ENCODE measurements at regions of chr2 and their contacts with region 1.

Region 1: GRCh38 chr2:83561592-83561991 is 897.5 kb downstream of the SUCLG1 start:
- DNase-seq: no peak
- ATAC-seq: no peak
- H3K4me3 ChIP-seq: no peak overlapping the region
- H3K27ac ChIP-seq: no peak overlapping the region
- H3K4me1 ChIP-seq: no peaks in the 10 kb centered on the region
- H3K27me3 ChIP-seq: no peaks in the 10 kb centered on the region
- CTCF ChIP-seq: no peak

Region 2: GRCh38 chr2:81747481-81748070 is 1814.0 kb before region 1 on chr2:
- intact Hi-C with region 1: loop called in 1 of 10 experiments (anchors 5 kb)
- DNase-seq: no peak
- ATAC-seq: no peak
- H3K4me3 ChIP-seq: no peak overlapping the region
- H3K27ac ChIP-seq: no peak overlapping the region
- H3K4me1 ChIP-seq: no peaks in the 10 kb centered on the region
- H3K27me3 ChIP-seq: no peaks in the 10 kb centered on the region
- CTCF ChIP-seq: no peak

Region 3: GRCh38 chr2:83602753-83603152 is 41.2 kb after region 1 on chr2:
- intact Hi-C with region 1: no loop called
- DNase-seq: no peak
- ATAC-seq: no peak
- H3K4me3 ChIP-seq: no peak overlapping the region
- H3K27ac ChIP-seq: no peak overlapping the region
- H3K4me1 ChIP-seq: no peaks in the 10 kb centered on the region
- H3K27me3 ChIP-seq: no peaks in the 10 kb centered on the region
- CTCF ChIP-seq: no peak

Region 4: GRCh38 chr2:83782122-83782521 is 220.5 kb after region 1 on chr2:
- intact Hi-C with region 1: no loop called
- DNase-seq: no peak
- ATAC-seq: no peak
- H3K4me3 ChIP-seq: no peak overlapping the region
- H3K27ac ChIP-seq: no peak overlapping the region
- H3K4me1 ChIP-seq: no peaks in the 10 kb centered on the region
- H3K27me3 ChIP-seq: no peaks in the 10 kb centered on the region
- CTCF ChIP-seq: no peak

Region 5: DNA sequence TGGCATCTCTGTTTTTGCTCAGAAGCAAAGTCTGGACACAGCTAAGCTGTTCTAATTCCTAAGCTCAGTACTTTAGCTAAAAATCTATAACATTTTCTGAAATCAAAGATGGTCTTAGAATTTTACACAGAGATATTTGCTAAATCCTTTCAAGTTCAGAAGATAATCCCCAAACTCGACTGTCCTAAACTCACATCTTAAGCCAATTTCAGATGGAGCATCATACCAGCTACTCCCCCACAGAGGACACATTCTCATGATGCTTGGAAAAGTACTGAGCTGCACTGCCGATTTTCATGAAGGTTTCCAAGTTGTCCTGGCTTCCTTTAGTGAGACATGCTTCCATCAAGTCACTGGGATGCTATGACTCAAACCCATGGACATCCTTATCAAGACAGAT is 361.9 kb after region 1 on chr2:
- intact Hi-C with region 1: no loop called
- DNase-seq: no peak
- ATAC-seq: no peak
- H3K4me3 ChIP-seq: no peak overlapping the region
- H3K27ac ChIP-seq: no peak overlapping the region
- H3K4me1 ChIP-seq: no peaks in the 10 kb centered on the region
- H3K27me3 ChIP-seq: no peaks in the 10 kb centered on the region
- CTCF ChIP-seq: no peak

Region 6: DNA sequence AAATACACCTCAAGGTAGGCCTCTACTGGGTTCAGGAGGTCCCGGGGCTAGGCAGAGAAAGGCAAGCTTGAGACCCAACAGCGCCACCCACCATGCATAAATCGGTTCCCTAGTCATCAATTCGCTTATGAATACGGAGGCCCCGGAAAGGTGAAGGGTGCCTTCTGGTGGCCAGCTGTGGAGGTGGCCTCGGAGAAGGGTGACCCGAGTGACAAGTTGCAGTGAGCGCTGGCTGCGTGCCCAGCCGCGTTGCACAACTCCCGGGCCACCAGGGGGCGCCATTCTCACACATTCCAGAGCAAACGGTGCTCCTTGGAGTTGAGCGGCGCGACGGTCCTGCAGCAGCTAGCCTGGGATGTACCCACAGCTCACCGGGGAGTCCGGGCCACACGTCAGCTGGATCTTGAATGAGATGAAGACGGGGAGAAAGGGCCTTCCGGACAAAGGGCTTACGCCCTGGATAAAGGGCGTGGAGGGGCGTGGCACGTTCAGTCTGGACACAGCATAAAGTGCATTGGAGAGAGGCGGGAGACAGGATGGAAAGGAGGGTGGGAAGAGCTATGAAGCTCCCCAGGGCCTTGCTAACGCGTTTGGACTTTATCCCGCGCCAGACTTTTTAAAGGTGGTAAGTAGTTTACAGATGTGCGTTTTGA is 1364.3 kb after region 1 on chr2:
- intact Hi-C with region 1: no loop called
- DNase-seq: peak; percentile 96 to 97
- ATAC-seq: peak; percentile 79 to 91 (median 86)
- H3K4me3 ChIP-seq: peak overlapping the region in 9 of 10 donors; percentile 4 to 52 (median 44)
- H3K27ac ChIP-seq: peak overlapping the region in 9 of 10 donors; percentile 29 to 91 (median 83)
- H3K4me1 ChIP-seq: peaks cover 6 to 38% (median 23%) of the 10 kb centered on the region in 9 donors
- H3K27me3 ChIP-seq: no peaks in the 10 kb centered on the region
- CTCF ChIP-seq: peak; percentile 95 to 100 (median 99)

Measured in heart right ventricle (tissue), 16 donors.